ENCODE measurements at regions of chr22 and their contacts with region 1.

Region 1: DNA sequence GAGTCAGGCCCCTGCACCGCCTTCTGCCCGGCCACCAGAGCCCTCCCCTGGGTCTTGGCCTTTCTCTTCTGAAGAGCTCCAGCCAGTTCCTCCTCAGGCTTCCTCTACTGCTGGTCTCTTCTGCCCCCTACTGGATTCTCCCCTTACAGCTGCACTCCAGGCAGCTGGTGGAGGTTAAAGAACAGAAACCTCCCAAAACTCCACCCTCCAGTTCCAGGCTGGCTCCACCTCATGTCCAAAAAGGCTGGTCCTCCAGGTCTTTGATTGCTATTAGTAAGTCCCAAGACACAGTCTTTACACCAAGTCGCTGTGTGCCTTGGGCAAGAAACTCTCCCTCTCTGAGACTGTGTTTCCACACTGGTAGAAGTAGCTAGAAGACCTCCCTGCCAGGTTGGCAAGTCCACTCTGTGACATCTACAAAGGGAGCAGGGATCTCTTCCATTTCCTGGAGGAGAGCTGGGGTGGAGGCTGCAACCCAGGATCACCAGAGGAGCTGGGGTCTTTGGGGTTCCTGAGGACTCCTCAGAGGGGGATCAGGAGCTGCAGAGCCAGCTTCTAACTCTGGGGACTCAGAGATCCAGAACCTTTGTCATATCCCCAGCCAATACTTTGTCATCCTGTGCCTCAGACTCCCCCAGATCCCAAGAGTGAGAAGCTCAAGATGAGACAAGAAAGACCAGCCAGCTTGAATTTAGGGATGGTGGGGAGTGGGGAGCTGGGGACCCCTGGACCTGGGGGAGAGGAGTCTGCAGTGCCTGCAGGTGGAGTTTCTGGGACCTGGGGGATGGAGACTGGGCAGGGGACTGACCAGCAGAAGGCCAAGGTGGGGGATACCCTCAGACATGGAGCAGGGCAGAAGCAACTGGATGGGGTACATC is 3.4 kb upstream of the IGLL5 start:
- DNase-seq: peak; percentile 78
- H3K4me3 Mint-ChIP-seq: no peak overlapping the region
- H3K27ac Mint-ChIP-seq: no peak overlapping the region
- H3K4me1 Mint-ChIP-seq: no peaks in the 10 kb centered on the region
- H3K27me3 Mint-ChIP-seq: peaks cover 89% of the 10 kb centered on the region
- CTCF ChIP-seq: peak; percentile 67

Region 2: GRCh38 chr22:22463855-22464540 is 420.3 kb before region 1 on chr22:
- CTCF ChIA-PET with region 1: interaction called, 3 read pairs
- intact Hi-C with region 1: loop called (anchors 10 kb)
- DNase-seq: peak; percentile 59
- H3K4me3 Mint-ChIP-seq: no peak overlapping the region
- H3K27ac Mint-ChIP-seq: no peak overlapping the region
- H3K4me1 Mint-ChIP-seq: no peaks in the 10 kb centered on the region
- H3K27me3 Mint-ChIP-seq: peaks cover 76% of the 10 kb centered on the region
- CTCF ChIP-seq: peak; percentile 83

Region 3: GRCh38 chr22:22684580-22685561 is 199.4 kb before region 1 on chr22:
- CTCF ChIA-PET with region 1: interaction called, 15 read pairs
- intact Hi-C with region 1: no loop called
- DNase-seq: peak; percentile 75
- H3K4me3 Mint-ChIP-seq: no peak overlapping the region
- H3K27ac Mint-ChIP-seq: no peak overlapping the region
- H3K4me1 Mint-ChIP-seq: no peaks in the 10 kb centered on the region
- H3K27me3 Mint-ChIP-seq: peaks cover 31% of the 10 kb centered on the region
- CTCF ChIP-seq: peak; percentile 76

Region 4: DNA sequence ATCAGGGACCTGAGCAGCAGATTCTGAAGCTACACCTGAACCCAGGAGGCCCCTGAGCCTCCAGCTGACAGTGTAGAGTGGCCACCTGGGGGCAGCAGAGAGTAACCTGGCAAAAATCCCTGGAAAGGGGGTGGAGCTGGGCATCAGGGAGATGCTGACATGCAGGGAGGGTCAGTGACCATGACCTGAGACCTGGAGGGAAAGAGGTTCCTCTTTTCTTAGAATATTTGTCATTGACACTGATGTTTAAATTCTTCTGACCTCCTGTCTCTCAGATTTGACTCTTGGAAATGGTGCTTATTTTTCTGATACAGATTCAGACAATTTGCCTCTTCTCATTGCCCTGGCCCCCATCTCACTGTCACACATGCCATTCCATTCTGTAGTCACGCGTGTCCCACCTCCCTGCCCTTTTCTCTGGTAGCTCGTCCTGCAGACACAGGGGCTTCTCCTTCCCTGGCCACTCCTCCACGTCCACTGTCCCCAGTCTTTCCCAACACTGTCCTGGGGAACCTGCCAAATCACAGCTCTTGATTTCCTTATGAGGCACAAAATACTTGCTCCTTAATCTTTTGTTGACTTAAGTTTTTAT is 113.9 kb before region 1 on chr22:
- CTCF ChIA-PET with region 1: interaction called, 27 read pairs
- intact Hi-C with region 1: no loop called
- DNase-seq: peak; percentile 84
- H3K4me3 Mint-ChIP-seq: no peak overlapping the region
- H3K27ac Mint-ChIP-seq: no peak overlapping the region
- H3K4me1 Mint-ChIP-seq: no peaks in the 10 kb centered on the region
- H3K27me3 Mint-ChIP-seq: peaks cover 97% of the 10 kb centered on the region
- CTCF ChIP-seq: peak; percentile 84

Region 5: GRCh38 chr22:22810018-22810427 is 74.2 kb before region 1 on chr22:
- CTCF ChIA-PET with region 1: interaction called, 15 read pairs
- intact Hi-C with region 1: loop called (anchors 10 kb)
- DNase-seq: peak; percentile 56
- H3K4me3 Mint-ChIP-seq: no peak overlapping the region
- H3K27ac Mint-ChIP-seq: no peak overlapping the region
- H3K4me1 Mint-ChIP-seq: no peaks in the 10 kb centered on the region
- H3K27me3 Mint-ChIP-seq: peaks cover 73% of the 10 kb centered on the region
- CTCF ChIP-seq: no peak

Region 6: DNA sequence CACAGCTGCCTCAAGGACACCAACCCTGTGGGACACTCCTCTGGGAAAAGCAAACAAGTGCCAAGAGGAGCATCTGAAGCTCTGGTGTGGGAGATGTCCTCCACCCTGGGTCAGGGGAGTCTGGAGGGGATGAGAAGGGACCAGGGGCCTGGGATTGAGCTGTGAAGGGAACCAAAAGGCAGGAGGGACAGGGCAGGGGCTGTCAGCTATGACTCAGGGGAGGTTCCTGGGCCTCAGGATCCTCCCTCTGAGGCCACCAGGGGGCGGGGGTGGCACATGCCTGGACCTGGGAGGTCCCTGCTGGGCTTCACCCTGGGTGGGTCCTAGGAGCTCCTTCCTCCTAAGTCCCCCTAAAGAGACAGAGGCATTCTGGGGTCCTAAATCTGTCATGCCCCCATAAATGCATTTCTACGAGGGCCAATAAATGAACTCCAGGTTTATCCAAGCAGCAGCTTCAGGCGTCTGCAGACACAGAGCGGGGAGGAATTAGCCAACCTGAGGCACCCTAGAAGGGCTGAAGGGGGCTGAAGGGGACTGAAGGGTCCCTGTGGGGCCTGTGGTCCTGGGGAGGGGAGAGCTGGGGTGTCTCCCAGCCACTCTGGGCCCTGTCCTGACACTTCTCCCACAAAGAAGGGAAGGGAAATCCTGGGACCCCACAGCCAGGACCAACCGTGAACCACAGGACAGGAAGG is 28.5 kb before region 1 on chr22:
- CTCF ChIA-PET with region 1: interaction called, 25 read pairs
- intact Hi-C with region 1: no loop called
- DNase-seq: peak; percentile 60
- H3K4me3 Mint-ChIP-seq: no peak overlapping the region
- H3K27ac Mint-ChIP-seq: no peak overlapping the region
- H3K4me1 Mint-ChIP-seq: no peaks in the 10 kb centered on the region
- H3K27me3 Mint-ChIP-seq: peaks cover 87% of the 10 kb centered on the region
- CTCF ChIP-seq: peak; percentile 76